Mammary epithelial cell (primary cell): ENCODE measurements at regions of chr22 and their contacts with region 1.

Region 1: DNA sequence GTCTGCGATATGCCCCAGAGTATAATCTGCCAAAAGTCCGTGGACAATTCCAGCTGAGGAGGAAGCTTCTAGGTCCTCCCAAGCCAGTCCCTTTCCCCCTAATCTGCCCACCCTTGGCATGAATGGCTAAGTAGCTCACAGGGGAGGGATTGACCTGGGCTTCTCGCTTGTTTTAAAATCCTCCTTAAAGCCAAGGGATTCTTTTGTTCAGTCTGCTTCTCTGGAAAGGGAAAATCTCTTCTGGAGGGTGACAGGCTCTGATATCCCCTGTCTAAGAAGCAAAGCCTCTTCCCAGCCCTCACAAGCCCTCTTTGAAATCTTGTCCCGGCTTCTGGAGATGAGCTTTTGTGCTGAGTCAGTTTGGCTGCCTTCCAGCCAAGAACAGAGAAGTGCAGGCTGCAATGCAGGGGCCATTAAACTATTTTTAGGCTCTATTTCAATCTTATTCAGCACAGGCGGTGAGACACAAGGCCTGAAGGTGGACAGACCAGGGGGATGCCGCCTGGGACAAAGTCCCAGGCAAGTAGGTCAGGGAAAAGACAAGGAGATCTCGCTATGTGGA is 23.9 kb downstream of the NEFH start:
- DNase-seq: no peak
- H3K4me3 ChIP-seq: no peak overlapping the region
- H3K27ac ChIP-seq: no peak overlapping the region
- H3K4me1 ChIP-seq: no peaks in the 10 kb centered on the region
- H3K27me3 ChIP-seq: no peaks in the 10 kb centered on the region
- CTCF ChIP-seq: no peak

Region 2: GRCh38 chr22:29531419-29531818 is 27.5 kb after region 1 on chr22:
- CTCF ChIA-PET with region 1: no interaction called
- dilution Hi-C with region 1: loop called (anchors 5 kb)
- in situ Hi-C with region 1: no loop called
- intact Hi-C with region 1: no loop called
- DNase-seq: no peak
- H3K4me3 ChIP-seq: no peak overlapping the region
- H3K27ac ChIP-seq: no peak overlapping the region
- H3K4me1 ChIP-seq: no peaks in the 10 kb centered on the region
- H3K27me3 ChIP-seq: no peaks in the 10 kb centered on the region
- CTCF ChIP-seq: no peak

Region 3: DNA sequence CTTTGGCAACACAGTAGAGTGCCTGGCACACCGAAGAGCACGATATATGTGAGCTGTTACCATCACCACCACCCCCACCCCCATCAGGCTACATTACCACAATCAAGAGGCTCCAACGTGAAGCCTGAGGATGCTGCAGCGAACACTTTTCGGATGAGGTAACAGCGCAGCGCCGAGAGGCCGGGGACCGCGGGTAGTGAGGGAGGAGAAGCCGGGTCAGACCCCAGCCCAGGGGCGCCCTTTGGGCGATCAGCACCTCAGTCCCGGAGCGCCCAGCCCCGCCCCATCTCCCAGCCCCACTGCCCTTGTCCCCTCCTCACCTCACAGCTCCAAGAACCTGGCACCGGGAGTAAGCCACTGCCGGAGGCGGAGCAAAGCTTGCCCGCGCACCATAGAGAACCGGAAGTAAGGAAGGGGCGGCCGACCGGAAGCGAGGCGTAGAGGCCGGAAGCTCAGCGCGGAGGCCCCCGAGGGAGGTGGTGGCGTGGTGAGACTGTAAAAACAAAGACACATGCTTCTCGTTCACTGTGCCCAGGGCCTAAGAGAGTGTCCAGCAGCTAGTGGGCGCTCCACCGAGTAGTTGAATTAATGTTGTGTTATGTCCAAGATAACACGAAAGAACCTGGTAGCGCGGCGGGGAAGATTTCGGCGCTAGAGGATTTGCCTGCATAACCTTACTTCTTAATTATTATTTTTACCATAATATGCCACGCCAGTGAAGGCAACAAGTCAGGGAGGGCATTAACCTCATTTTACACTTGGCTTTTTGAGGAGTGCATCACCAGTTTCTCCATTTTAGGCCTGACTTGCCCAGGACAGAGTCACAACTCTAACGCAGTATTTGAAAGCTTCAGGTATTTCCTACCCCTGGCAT is 49.7 kb after region 1 on chr22 and contains the start of gene THOC5:
- CTCF ChIA-PET with region 1: interaction called, 13 read pairs
- dilution Hi-C with region 1: no loop called
- in situ Hi-C with region 1: no loop called
- intact Hi-C with region 1: no loop called
- DNase-seq: peak; percentile 95
- H3K4me3 ChIP-seq: peak within 1 kb of the TSS; percentile 65 to 94 (median 80)
- H3K27ac ChIP-seq: peak within 1 kb of the TSS; percentile 63
- H3K4me1 ChIP-seq: peaks cover 8% of the 10 kb centered on the region
- H3K27me3 ChIP-seq: no peaks in the 10 kb centered on the region
- CTCF ChIP-seq: peak; percentile 53 to 63
- total RNA-seq, gene THOC5: 46.3 to 56.2 TPM

Region 4: GRCh38 chr22:29801153-29801552 is 297.3 kb after region 1 on chr22:
- CTCF ChIA-PET with region 1: no interaction called
- dilution Hi-C with region 1: no loop called
- in situ Hi-C with region 1: no loop called
- intact Hi-C with region 1: no loop called
- DNase-seq: no peak
- H3K4me3 ChIP-seq: no peak overlapping the region
- H3K27ac ChIP-seq: no peak overlapping the region
- H3K4me1 ChIP-seq: peaks cover 21% of the 10 kb centered on the region
- H3K27me3 ChIP-seq: no peaks in the 10 kb centered on the region
- CTCF ChIP-seq: no peak